CD14-positive monocyte (primary cell): ENCODE measurements at regions of chr1 and their contacts with region 1.

Region 1: DNA sequence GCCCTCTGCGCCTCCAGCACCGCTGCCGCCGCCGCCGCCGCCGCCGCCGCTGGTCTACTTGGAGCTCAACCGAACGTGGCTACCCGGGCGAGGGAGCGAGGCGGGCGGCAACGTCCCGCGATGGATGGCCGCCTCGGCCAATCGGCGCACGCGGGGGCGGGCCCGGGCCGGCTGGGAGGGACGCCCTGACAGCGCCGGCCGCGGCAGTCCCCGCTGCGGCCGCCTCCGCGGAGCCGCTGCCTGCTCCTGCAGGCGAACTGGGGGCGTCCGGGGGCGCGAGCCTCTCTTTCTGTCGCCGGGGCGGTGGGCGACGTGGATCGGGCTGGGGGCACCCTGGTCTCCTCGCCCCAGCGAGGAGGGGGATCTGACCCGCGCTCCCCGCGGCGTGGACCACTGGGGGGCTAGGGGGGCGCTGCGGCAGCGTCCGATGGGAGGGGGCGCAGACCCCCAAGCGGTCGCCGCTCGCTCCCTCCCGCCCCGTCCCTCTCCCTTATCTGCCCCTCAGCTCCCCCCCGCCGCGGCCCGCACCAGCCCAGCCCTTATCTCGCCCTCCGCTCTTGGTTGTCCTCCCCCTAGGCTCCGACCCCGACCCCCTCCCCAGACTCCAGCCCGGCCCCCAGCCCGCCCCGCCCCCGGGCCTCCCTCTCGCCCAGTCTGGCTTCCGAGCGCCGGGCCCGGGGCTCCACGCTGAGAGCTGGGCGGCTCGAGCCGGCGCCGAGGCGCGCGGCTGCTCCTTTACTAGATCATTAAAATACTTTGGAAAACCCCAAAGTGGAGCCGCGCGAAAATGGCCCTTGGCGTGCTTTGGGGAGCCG is at the start of gene SSBP3:
- DNase-seq: peak; percentile 83 to 88 (median 85)
- H3K4me3 ChIP-seq: peak within 1 kb of the TSS; percentile 61 to 97 (median 96)
- H3K4me3 Mint-ChIP-seq: peak within 1 kb of the TSS; percentile 86 to 92
- H3K27ac ChIP-seq: peak within 1 kb of the TSS; percentile 57 to 92
- H3K27ac Mint-ChIP-seq: peak within 1 kb of the TSS; percentile 87 to 93 (median 90)
- H3K4me1 ChIP-seq: peaks cover 32 to 54% of the 10 kb centered on the region in 2 donors
- H3K4me1 Mint-ChIP-seq: peaks cover 51% of the 10 kb centered on the region
- H3K27me3 ChIP-seq: peaks cover 0 to 8% of the 10 kb centered on the region in 2 donors
- H3K27me3 Mint-ChIP-seq: peaks cover 8 to 13% (median 11%) of the 10 kb centered on the region in 3 donors
- CTCF ChIP-seq: peak; percentile 7
- polyA plus RNA-seq, gene SSBP3: 4.1 to 30.7 (median 4.3) TPM

Region 2: DNA sequence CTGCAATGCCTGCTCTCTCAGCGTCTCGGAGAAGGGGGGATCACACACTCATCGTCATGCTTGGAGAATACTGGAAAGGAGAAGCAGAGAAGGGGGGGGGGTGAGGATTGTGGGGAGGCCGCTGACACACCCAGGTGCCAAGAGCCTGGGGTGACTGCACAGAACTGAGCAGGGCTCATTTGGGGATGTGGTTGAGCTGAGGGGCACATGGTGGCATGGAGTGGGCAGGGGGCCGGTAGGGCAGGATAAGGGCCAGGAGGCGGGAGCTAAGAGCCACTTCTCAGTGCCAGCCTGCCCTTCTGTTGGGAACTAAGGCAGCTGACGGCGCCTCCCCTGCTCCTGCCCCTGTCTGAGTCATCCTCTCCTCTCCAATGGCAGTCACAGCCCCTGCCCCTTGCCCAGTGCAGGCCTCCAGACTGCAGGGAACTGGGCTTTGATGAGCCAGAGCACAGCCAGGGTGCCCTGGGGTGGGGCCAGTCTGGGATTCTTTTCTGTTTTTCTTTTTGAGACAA is 179.4 kb before region 1 on chr1:
- intact Hi-C with region 1: loop called in 1 of 2 experiments (anchors 10 kb)
- DNase-seq: peak; percentile 82 to 86 (median 82)
- H3K4me3 ChIP-seq: no peak overlapping the region
- H3K4me3 Mint-ChIP-seq: peak overlapping the region; percentile 35 to 41
- H3K27ac ChIP-seq: peak overlapping the region in 1 of 2 donors; percentile 69
- H3K27ac Mint-ChIP-seq: peak overlapping the region; percentile 46 to 90 (median 81)
- H3K4me1 ChIP-seq: peaks cover 27 to 46% of the 10 kb centered on the region in 2 donors
- H3K4me1 Mint-ChIP-seq: peaks cover 40% of the 10 kb centered on the region
- H3K27me3 ChIP-seq: no peaks in the 10 kb centered on the region
- H3K27me3 Mint-ChIP-seq: peaks cover 0 to 5% (median 0%) of the 10 kb centered on the region in 3 donors
- CTCF ChIP-seq: no peak